ENCODE measurements at regions of chr22 and their contacts with region 1.

Region 1: DNA sequence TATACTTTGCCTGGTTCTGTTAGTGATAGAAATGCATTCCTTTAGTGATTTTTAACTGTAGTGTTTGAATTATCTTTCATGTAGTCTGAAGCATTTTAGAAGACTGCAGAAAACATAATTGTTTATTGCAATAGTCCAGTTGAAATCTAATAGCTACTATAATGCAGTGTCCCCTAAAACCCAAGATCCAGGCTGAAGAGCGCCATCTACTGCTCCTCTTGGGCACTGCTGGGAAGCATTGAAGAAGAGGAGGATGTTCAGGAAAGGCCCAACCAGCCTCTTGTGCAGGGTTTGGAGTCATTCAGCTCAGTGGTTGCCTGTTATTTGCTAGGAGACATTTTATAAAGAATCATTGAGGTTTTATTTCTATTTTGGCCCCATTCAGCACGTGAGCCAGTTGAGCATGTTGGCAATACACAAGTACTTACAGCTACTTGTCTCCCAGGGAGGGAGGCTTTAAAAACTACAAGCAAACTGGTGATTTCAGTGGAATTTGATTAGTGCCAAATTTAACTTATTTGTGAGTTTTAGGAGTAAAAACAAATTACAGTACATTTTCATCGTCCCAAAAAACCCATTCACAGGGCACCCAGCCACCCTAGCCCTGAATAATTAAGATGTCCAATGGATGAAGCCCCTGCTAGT is 74.9 kb upstream of the HORMAD2 start:
- DNase-seq: peak; percentile 24 to 74
- ATAC-seq: peak; percentile 88 to 89
- H3K4me3 ChIP-seq: no peak overlapping the region
- H3K27ac ChIP-seq: peak overlapping the region; percentile 35 to 39 (median 36)
- H3K4me1 ChIP-seq: peaks cover 11 to 15% of the 10 kb centered on the region in 2 donors
- H3K27me3 ChIP-seq: no peaks in the 10 kb centered on the region
- CTCF ChIP-seq: peak; percentile 86 to 95 (median 94)
- POLR2A ChIP-seq: no peak

Region 2: DNA sequence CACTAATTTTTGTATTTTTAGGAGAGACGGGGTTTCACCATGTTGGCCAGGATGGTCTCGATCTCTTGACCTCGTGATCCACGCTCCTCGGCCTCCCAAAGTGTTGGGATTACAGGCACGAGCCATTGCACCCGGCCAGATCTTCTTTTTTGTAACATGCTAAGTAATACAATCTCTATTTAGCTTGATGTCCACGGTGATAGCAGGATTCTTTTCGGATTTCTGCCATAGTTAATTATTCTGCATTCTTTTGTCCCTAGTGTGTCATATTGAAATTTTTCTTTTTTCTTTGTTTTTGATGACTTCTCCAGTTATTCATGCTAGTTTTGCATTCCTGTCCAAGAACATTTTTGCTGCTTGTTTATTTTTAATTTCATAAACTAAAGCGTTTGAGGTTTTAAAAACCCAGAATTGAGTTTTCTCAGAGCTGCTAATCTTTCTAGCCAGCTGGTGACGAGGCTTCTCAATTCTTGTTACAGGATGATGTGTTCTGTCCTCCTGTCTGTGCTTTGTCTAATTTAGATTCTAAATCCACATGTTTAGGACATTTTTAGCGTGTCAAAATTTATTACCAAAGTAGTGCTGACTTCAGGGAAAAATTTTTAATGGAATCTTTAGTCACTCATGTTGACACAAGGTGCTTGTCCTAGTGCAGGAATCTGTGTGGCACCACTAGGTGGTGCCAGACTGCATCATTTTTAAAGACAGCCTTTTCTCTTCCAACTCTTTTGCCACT is 380.1 kb before region 1 on chr22:
- in situ Hi-C with region 1: loop called in 1 of 4 experiments (anchors 25 kb)
- intact Hi-C with region 1: loop called (anchors 5 kb)
- DNase-seq: peak in 1 of 2 donors; percentile 37
- ATAC-seq: peak; percentile 47 to 73
- H3K4me3 ChIP-seq: no peak overlapping the region
- H3K27ac ChIP-seq: peak overlapping the region in 1 of 4 donors; percentile 6
- H3K4me1 ChIP-seq: peaks cover 42 to 50% of the 10 kb centered on the region in 2 donors
- H3K27me3 ChIP-seq: no peaks in the 10 kb centered on the region
- CTCF ChIP-seq: peak; percentile 46 to 86 (median 60)
- POLR2A ChIP-seq: no peak

Region 3: DNA sequence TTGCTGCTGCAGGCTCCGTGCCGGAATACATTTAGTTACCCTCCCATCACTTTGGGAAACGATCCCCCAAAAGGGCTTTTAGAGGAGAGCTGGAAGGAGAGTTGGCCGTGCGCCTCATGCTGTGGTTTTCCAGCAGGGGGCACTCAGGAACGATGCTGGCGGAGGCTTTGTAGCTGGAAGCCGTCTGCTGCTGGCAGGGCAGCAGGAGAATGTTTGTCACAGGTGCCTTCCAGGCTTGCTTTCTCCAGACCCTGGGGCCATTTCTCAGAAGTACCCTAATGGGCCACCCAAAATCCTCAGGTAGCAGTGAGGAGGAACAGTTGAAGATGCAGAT is 315.5 kb before region 1 on chr22:
- in situ Hi-C with region 1: loop called in 2 of 4 experiments (anchors 25 kb)
- intact Hi-C with region 1: loop called (anchors 1 kb)
- DNase-seq: peak; percentile 20 to 62
- ATAC-seq: peak; percentile 39 to 93
- H3K4me3 ChIP-seq: no peak overlapping the region
- H3K27ac ChIP-seq: no peak overlapping the region
- H3K4me1 ChIP-seq: peaks cover 7 to 13% of the 10 kb centered on the region in 2 donors
- H3K27me3 ChIP-seq: no peaks in the 10 kb centered on the region
- CTCF ChIP-seq: peak; percentile 48 to 78 (median 70)
- POLR2A ChIP-seq: no peak

Region 4: GRCh38 chr22:29727131-29727523 is 278.2 kb before region 1 on chr22:
- in situ Hi-C with region 1: no loop called
- intact Hi-C with region 1: loop called (anchors 1 kb)
- DNase-seq: peak in 1 of 2 donors; percentile 30
- ATAC-seq: peak in 1 of 2 donors; percentile 10
- H3K4me3 ChIP-seq: no peak overlapping the region
- H3K27ac ChIP-seq: no peak overlapping the region
- H3K4me1 ChIP-seq: no peaks in the 10 kb centered on the region
- H3K27me3 ChIP-seq: no peaks in the 10 kb centered on the region
- CTCF ChIP-seq: peak in 2 of 5 experiments; percentile 38 to 56
- POLR2A ChIP-seq: no peak

Region 5: GRCh38 chr22:29766632-29767170 is 238.6 kb before region 1 on chr22 and contains the start of gene ZMAT5:
- in situ Hi-C with region 1: loop called in 1 of 4 experiments (anchors 10 kb)
- intact Hi-C with region 1: loop called (anchors 2 kb)
- DNase-seq: peak; percentile 95 to 96
- ATAC-seq: peak; percentile 93 to 97
- H3K4me3 ChIP-seq: peak within 1 kb of the TSS; percentile 84 to 96 (median 88)
- H3K27ac ChIP-seq: peak within 1 kb of the TSS; percentile 94 to 95 (median 95)
- H3K4me1 ChIP-seq: peaks cover 41 to 48% of the 10 kb centered on the region in 2 donors
- H3K27me3 ChIP-seq: no peaks in the 10 kb centered on the region
- CTCF ChIP-seq: no peak
- POLR2A ChIP-seq: peak in 1 of 2 donors; percentile 88
- total RNA-seq, gene ZMAT5: 23.8 to 38.6 (median 33.8) TPM

Region 6: GRCh38 chr22:29855611-29856181 is 149.6 kb before region 1 on chr22:
- in situ Hi-C with region 1: loop called in 1 of 4 experiments (anchors 10 kb)
- intact Hi-C with region 1: loop called (anchors 1 kb)
- DNase-seq: peak in 1 of 2 donors; percentile 75
- ATAC-seq: peak; percentile 54 to 85
- H3K4me3 ChIP-seq: no peak overlapping the region
- H3K27ac ChIP-seq: peak overlapping the region; percentile 65 to 80 (median 78)
- H3K4me1 ChIP-seq: peaks cover 8 to 16% of the 10 kb centered on the region in 2 donors
- H3K27me3 ChIP-seq: no peaks in the 10 kb centered on the region
- CTCF ChIP-seq: peak; percentile 11 to 54 (median 27)
- POLR2A ChIP-seq: no peak

Region 7: GRCh38 chr22:29871684-29872083 is 133.7 kb before region 1 on chr22:
- in situ Hi-C with region 1: loop called in 1 of 4 experiments (anchors 10 kb)
- intact Hi-C with region 1: loop called (anchors 5 kb)
- DNase-seq: peak; percentile 22 to 70
- ATAC-seq: peak; percentile 73 to 88
- H3K4me3 ChIP-seq: no peak overlapping the region
- H3K27ac ChIP-seq: peak overlapping the region; percentile 72 to 95 (median 86)
- H3K4me1 ChIP-seq: peaks cover 27 to 33% of the 10 kb centered on the region in 2 donors
- H3K27me3 ChIP-seq: no peaks in the 10 kb centered on the region
- CTCF ChIP-seq: no peak
- POLR2A ChIP-seq: no peak

Region 8: DNA sequence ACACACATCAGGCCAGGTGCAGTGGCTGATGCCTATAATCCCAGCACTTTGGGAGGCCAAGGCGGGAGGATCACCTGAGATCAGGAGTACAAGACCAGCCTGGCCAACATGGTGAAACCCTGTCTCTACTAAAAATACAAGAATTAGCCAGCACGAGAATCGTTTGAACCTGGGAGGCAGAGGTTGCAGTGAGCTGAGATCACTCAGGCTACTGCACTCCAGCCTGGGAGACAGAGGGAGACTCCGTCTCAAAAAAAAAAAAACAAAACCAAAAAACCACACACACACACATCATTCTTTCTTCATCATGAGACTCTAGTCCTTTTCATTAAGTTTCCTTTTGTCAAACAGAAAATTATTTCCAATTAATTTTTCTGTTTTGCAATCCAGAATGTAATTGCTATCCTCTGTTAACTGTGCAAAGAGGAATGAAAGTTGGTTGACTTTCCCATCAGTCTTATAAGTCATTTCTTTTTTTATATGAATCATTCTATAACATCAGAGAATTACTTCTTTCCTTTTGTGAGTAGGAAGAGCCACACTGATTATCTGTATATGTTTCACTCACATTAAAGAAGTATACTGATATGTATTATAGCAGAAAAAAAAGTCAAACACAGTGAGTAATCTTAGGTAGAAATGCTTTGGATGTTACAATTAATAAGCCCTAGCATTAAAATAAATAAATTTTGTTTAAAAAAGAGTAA is 127.1 kb after region 1 on chr22:
- in situ Hi-C with region 1: no loop called
- intact Hi-C with region 1: no loop called
- DNase-seq: no peak
- ATAC-seq: no peak
- H3K4me3 ChIP-seq: no peak overlapping the region
- H3K27ac ChIP-seq: no peak overlapping the region
- H3K4me1 ChIP-seq: no peaks in the 10 kb centered on the region
- H3K27me3 ChIP-seq: no peaks in the 10 kb centered on the region
- CTCF ChIP-seq: no peak
- POLR2A ChIP-seq: no peak